BJ (cell line): ENCODE measurements at regions of chr15 and their contacts with region 1.

Region 1: GRCh38 chr15:73873889-73874511 is 636 bp downstream of the TBC1D21 start:
- DNase-seq: no peak
- H3K4me3 ChIP-seq: no peak overlapping the region
- H3K27me3 ChIP-seq: peaks cover 14% of the 10 kb centered on the region
- CTCF ChIP-seq: peak; percentile 61

Region 2: DNA sequence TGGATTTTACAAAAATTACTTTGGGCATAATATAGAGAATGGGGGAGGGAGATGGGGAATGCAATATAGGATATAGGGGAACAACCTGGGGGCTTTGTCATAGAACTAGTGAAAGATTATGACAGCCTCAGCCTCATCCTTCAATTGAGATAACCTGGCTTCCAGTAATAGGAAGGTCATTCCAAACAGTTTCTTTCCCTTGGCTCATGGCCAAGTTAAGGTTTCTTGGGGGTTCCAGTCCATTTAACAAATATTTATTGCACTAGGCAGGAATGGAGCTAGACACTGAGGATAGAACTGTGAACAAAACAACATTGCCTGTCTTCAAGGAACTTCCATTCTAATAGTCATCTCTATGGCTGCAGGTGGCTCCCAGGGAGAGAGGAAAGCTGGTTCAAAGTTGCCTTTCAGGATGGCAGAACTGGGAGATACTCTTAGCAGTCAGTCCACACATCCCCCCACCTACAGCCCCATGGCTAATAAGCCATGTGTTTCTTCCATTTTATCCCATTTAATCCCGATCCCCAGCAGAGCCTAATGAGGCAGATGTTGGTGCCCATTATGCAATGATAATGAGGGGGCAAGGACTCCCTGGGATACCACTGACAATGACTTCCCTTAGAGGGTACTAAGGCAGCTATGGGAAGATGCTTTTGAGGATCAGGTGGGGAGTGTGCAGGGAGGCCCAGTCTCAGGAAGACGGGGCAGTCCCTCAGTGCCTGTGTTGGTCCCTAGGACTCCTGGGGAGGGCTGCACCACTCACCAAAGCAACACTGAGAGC is 44.7 kb before region 1 on chr15:
- CTCF ChIA-PET with region 1: no interaction called
- POLR2A ChIA-PET with region 1: no interaction called
- DNase-seq: no peak
- H3K4me3 ChIP-seq: no peak overlapping the region
- H3K27me3 ChIP-seq: peaks cover 6% of the 10 kb centered on the region
- CTCF ChIP-seq: no peak

Region 3: GRCh38 chr15:73858062-73858461 is 15.9 kb before region 1 on chr15:
- CTCF ChIA-PET with region 1: interaction called, 22 read pairs
- POLR2A ChIA-PET with region 1: no interaction called
- DNase-seq: no peak
- H3K4me3 ChIP-seq: no peak overlapping the region
- H3K27me3 ChIP-seq: peaks cover 11% of the 10 kb centered on the region
- CTCF ChIP-seq: no peak

Region 4: DNA sequence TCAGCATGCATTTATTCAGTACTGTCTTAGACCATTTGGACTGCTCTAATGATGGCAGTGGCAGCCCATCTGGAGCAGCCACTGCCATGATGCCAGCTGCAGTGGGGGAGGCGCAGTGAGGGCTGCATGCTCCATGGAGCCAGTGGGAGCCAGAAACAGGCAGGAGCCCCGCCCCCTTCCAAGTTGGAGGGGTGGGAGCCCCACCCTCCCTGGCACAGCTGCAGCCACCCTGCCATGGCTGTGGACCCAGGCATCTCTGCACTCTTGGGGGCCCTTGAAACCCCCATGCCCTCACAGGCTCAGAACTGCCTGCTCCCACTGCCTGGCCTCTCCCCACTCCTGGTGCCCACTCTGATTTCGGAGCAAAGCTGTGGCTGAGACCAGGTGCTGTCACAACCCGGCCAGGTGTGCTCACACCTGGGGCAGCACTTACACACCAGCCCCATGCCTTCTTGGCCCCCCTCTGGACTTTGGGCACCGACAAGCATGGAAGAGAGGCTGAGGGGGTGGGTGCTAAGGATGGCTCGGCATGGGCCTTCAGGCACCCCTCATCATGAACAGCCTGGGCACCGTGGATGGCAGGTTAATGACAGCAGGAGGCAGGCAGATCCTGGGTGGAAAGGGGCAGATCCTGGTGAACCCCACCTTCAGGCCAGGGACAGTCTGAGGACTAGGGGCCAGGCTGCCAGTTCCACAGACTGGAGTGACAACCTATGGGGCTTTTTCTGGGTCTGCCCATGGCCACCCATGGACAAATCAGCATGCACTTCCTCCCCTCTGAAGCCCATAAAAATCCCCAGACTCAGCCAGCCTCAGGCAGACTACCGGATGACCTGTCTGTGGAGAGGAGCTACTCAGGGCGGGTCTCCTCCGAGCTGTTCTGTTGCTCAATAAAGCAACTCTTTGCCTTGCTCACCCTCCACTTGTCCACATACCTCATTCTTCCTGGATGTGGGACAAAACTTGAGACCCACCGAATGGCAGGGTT is 17.6 kb after region 1 on chr15:
- CTCF ChIA-PET with region 1: interaction called, 15 read pairs
- POLR2A ChIA-PET with region 1: no interaction called
- DNase-seq: no peak
- H3K4me3 ChIP-seq: no peak overlapping the region
- H3K27me3 ChIP-seq: peaks cover 7% of the 10 kb centered on the region; the same call in 1 of the 2 replicates
- CTCF ChIP-seq: no peak

Region 5: GRCh38 chr15:73897441-73898261 is 23.7 kb after region 1 on chr15:
- CTCF ChIA-PET with region 1: interaction called, 13 read pairs
- POLR2A ChIA-PET with region 1: no interaction called
- DNase-seq: peak; percentile 39
- H3K4me3 ChIP-seq: no peak overlapping the region
- H3K27me3 ChIP-seq: no peaks in the 10 kb centered on the region
- CTCF ChIP-seq: peak; percentile 97

Region 6: DNA sequence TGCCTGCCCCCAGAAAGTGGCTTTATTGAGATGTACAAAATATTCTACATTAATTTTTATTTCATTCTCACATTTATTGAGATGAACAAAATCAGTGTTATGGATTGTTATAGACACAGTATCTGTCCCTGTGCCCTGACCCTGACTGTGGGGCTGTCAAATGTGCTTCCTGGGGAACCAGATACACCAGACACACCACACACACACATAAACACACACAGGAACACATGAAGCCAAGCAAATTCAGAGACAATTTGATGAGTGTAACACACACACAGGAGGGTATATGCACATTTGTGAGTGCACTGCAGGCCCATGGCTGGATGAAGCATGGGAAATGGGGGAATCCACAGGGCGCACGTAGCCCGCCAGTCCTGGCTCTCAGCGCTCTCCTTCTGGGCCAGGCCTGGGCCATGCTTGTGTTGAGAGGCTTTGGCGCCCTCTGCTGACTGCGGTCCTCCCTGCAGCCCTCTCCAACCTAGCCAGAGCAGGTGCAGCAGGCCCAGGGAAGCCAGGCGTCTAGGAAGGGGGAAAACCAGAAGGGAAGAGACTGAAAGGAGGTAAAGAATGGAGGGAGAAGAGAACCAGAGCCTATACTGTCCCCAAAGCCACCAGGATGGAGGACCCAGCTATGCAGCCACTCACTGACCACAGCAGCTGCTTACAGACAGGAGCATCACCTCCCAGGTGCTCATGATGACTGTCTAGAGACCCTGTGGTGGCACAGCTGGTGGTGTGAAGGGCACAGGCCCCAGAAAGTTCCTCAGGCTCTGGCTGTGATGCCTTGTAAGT is 34.2 kb after region 1 on chr15:
- CTCF ChIA-PET with region 1: interaction called, 108 read pairs
- POLR2A ChIA-PET with region 1: no interaction called
- DNase-seq: no peak
- H3K4me3 ChIP-seq: no peak overlapping the region
- H3K27me3 ChIP-seq: no peaks in the 10 kb centered on the region
- CTCF ChIP-seq: peak; percentile 97

Region 7: DNA sequence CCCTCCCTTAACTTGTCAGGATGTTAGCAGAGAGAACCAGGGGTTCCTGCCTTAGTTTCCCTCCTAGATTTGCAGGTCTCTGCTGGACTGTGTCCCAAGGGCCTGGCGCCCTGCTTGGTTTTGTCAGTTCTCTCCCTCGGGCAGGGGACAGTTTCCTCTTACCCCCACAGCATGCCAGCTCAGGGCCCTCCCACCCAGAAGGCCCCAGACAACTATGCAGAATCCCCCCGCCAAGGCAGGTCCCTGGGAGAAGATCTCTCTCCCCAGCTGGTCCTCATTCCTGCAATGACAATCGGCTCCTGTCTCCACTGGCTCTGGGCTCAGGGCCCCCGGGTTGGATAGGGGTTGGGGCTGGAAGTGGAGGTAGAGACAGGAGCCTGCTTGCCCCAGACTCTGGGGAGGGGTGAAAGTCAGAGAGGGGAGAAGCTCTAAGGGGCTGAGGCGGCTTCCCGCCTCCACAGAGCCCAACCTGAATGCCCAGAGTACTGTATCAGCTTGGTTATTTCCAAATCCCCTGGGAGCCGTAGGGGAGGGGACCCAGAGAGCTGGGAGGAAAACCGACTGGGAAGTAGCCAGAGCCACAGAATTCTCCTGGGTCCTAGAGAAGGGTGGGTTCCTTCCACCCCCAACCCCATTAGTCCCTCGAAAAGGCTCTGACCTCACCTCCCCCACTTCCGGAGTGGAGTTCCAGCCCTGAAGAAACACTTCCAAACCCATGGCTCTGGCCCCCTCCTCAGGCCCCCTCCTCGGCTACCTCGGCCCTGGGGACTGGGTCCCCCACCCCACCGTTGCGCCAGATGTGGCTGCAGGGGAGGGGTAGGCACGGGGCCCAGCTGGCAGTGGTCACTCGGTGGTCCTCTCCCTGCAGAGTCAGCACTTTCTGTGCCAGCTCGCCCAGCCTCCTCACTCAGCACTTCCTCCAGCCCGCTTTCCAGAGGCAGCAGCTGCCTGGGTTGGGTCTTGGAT is 48.5 kb after region 1 on chr15:
- CTCF ChIA-PET with region 1: interaction called, 11 read pairs
- POLR2A ChIA-PET with region 1: no interaction called
- DNase-seq: no peak
- H3K4me3 ChIP-seq: no peak overlapping the region
- H3K27me3 ChIP-seq: no peaks in the 10 kb centered on the region
- CTCF ChIP-seq: no peak